PC-3 (cell line): ENCODE measurements at regions of chr2 and their contacts with region 1.

Region 1: GRCh38 chr2:170020777-170021176 is 157.2 kb upstream of the MYO3B start:
- DNase-seq: no peak
- ATAC-seq: no peak
- H3K4me3 ChIP-seq: no peak overlapping the region
- H3K27ac ChIP-seq: no peak overlapping the region
- H3K4me1 ChIP-seq: no peaks in the 10 kb centered on the region
- H3K27me3 ChIP-seq: no peaks in the 10 kb centered on the region
- CTCF ChIP-seq: no peak

Region 2: DNA sequence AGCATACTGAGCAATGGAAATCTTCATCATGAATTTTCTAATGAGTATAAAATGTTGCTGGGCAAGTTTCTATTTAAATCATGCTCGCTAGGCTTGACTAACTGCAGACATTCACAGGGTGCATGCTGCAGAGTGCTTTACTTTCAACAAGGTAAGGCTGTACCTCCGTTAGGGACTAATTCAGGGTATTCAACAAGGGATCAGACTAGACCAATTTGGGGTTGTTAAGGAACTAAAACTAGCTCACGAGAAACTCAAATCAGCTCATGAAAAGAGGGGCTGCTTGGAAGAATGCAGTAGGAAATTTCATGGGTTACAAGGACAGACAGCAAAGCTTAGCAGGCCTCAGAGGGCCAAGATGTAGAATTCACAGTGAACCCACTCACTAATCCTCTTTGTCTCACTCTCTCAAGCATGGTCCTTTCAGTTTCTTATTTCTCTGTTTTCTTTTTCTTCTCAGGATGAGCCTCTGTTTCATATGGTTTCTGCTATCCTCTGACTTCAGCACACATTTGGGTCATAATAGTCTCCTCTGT is 159.3 kb after region 1 on chr2:
- CTCF ChIA-PET with region 1: no interaction called
- POLR2A ChIA-PET with region 1: no interaction called
- intact Hi-C with region 1: no loop called
- DNase-seq: peak; percentile 50
- ATAC-seq: peak; percentile 45; the same call in 1 of the 2 replicates
- H3K4me3 ChIP-seq: no peak overlapping the region
- H3K27ac ChIP-seq: no peak overlapping the region
- H3K4me1 ChIP-seq: no peaks in the 10 kb centered on the region; the same call in 1 of the 2 replicates
- H3K27me3 ChIP-seq: no peaks in the 10 kb centered on the region
- CTCF ChIP-seq: no peak

Region 3: GRCh38 chr2:170241756-170242155 is 221.0 kb after region 1 on chr2:
- CTCF ChIA-PET with region 1: no interaction called
- POLR2A ChIA-PET with region 1: interaction called, 12 read pairs
- intact Hi-C with region 1: no loop called
- DNase-seq: no peak
- ATAC-seq: no peak
- H3K4me3 ChIP-seq: no peak overlapping the region
- H3K27ac ChIP-seq: no peak overlapping the region
- H3K4me1 ChIP-seq: peaks cover 13% of the 10 kb centered on the region
- H3K27me3 ChIP-seq: no peaks in the 10 kb centered on the region
- CTCF ChIP-seq: no peak